Heart left ventricle (tissue), 16 donors: ENCODE measurements at regions of chr9 and their contacts with region 1.

Region 1: GRCh38 chr9:6412487-6413364 is at the start of gene UHRF2:
- DNase-seq: peak; percentile 98 to 100 (median 99)
- ATAC-seq: peak; percentile 98 to 99 (median 99)
- H3K4me3 ChIP-seq: peak within 1 kb of the TSS; percentile 66 to 98 (median 95)
- H3K27ac ChIP-seq: peak within 1 kb of the TSS; percentile 69 to 98 (median 91)
- H3K4me1 ChIP-seq: peaks cover 0 to 37% (median 16%) of the 10 kb centered on the region in 12 donors
- H3K27me3 ChIP-seq: peaks cover 0 to 5% (median 0%) of the 10 kb centered on the region in 9 donors
- CTCF ChIP-seq: peak in 1 of 12 donors; percentile 17
- POLR2A ChIP-seq: peak in 1 of 2 donors; percentile 70
- total RNA-seq, gene UHRF2: 12.2 to 20.6 (median 17.1) TPM

Region 2: DNA sequence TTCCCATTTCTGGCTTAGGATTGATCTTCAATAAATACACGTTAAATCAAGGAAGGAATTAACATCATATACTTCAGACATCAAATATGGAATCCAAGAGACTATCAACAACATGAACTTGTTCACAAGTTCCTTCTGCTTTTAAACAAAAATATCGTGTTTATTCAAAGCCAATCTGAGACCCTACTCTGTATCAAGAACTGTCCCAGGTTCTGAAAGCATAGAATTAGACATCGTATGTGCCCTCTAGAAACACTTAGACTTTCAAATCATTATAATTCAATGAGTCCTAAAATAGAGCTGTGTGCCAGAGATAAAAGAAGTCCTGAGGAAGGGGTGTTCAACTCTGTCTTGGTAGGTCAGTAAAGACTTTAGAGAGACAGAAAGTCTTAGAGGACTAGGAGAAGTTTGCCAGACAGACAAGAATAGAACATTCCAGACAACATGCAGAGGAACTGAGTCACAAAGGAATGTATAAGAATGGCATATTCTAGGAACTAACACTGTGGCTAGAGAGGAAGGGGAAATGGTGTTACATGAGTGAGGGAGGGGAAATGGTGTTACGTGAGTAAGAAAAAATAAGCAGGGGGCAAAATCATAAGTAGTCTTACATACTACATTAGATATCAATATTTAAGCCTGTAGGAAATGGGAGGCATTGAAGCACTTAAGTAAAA is 81.6 kb before region 1 on chr9:
- intact Hi-C with region 1: no loop called
- DNase-seq: no peak
- ATAC-seq: no peak
- H3K4me3 ChIP-seq: no peak overlapping the region
- H3K27ac ChIP-seq: no peak overlapping the region
- H3K4me1 ChIP-seq: no peaks in the 10 kb centered on the region
- H3K27me3 ChIP-seq: peaks cover 0 to 6% (median 0%) of the 10 kb centered on the region in 9 donors
- CTCF ChIP-seq: no peak
- POLR2A ChIP-seq: no peak

Region 3: GRCh38 chr9:6449645-6450044 is 36.9 kb after region 1 on chr9:
- intact Hi-C with region 1: loop called in 2 of 10 experiments (anchors 5 kb)
- DNase-seq: no peak
- ATAC-seq: peak; percentile 59 to 78 (median 67)
- H3K4me3 ChIP-seq: no peak overlapping the region
- H3K27ac ChIP-seq: peak overlapping the region in 1 of 12 donors; percentile 7
- H3K4me1 ChIP-seq: peaks cover 0 to 46% (median 27%) of the 10 kb centered on the region in 12 donors
- H3K27me3 ChIP-seq: no peaks in the 10 kb centered on the region
- CTCF ChIP-seq: no peak
- POLR2A ChIP-seq: no peak

Region 4: DNA sequence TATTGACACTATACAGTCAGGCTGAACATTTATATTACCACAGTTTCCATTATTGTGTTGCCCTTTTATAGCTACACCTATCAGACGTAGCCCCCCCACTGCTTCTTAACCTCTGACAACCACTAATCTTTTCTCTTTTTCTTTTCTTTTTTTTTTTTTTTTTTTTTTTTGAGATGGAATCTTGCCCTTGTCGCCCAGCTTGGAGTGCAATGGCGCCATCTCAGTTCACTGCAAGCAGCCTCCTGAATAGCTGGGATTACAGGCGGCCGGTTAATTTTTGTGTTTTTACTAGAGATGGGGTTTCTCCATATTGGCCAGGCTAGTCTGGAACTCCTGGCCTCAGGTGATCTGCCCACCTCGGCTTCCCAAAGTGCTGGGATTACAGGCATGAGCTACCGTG is 75.7 kb after region 1 on chr9:
- intact Hi-C with region 1: loop called in 2 of 10 experiments (anchors 10 kb)
- DNase-seq: no peak
- ATAC-seq: no peak
- H3K4me3 ChIP-seq: no peak overlapping the region
- H3K27ac ChIP-seq: no peak overlapping the region
- H3K4me1 ChIP-seq: no peaks in the 10 kb centered on the region
- H3K27me3 ChIP-seq: no peaks in the 10 kb centered on the region
- CTCF ChIP-seq: no peak
- POLR2A ChIP-seq: no peak

Region 5: GRCh38 chr9:6498982-6499381 is 86.3 kb after region 1 on chr9:
- intact Hi-C with region 1: loop called in 1 of 10 experiments (anchors 10 kb)
- DNase-seq: no peak
- ATAC-seq: no peak
- H3K4me3 ChIP-seq: no peak overlapping the region
- H3K27ac ChIP-seq: no peak overlapping the region
- H3K4me1 ChIP-seq: peaks cover 0 to 6% (median 0%) of the 10 kb centered on the region in 12 donors
- H3K27me3 ChIP-seq: no peaks in the 10 kb centered on the region
- CTCF ChIP-seq: no peak
- POLR2A ChIP-seq: no peak

Region 6: GRCh38 chr9:6681147-6681956 is 268.6 kb after region 1 on chr9:
- intact Hi-C with region 1: loop called in 3 of 10 experiments (anchors 2 to 10 kb)
- DNase-seq: peak; percentile 96 to 99 (median 98)
- ATAC-seq: peak; percentile 98 to 99 (median 99)
- H3K4me3 ChIP-seq: peak overlapping the region; percentile 41 to 81 (median 66)
- H3K27ac ChIP-seq: peak overlapping the region; percentile 77 to 100 (median 95)
- H3K4me1 ChIP-seq: peaks cover 0 to 29% (median 10%) of the 10 kb centered on the region in 12 donors
- H3K27me3 ChIP-seq: no peaks in the 10 kb centered on the region
- CTCF ChIP-seq: peak in 1 of 12 donors; percentile 6
- POLR2A ChIP-seq: peak in 1 of 2 donors; percentile 69

Region 7: DNA sequence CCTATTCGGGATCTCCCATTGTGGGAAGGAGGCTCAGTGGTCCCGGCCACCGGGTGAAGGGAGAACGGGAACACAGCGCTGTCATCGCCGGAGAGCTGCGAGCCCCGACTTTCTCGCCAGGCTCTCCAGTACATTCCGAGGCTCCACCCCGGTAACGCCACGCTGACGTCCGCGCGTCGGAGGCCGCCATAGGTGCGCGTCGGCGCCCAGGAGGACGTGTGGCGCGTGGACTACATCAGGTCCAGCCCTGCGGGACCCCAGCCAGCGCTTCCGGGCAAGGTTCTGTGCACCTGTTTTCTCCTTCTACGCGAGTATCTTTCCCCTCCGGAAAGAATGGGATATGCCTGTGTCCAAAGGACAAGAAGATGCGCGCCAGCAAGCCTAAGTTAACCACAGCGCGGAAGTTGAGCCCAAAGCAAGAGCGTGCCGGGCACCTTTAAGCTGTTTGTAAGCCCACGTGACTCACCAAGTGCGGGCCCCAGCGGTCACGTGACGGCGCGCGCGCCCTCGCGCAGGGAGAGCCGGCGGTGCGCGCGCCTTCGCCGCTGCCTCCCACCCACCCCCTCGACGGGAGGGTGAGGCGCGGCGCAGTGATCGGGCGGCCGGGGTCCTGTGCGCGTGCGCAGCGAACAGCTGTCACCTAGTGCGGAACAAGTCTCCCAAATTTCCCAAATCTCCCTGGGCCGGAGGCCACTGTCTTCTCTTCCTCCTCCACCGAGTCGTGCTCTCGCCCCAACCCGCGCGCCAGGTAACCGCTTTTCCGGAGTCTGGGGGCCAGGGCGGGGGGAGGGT is 344.9 kb after region 1 on chr9 and contains the start of gene KDM4C:
- intact Hi-C with region 1: loop called in 1 of 10 experiments (anchors 5 kb)
- DNase-seq: peak; percentile 94 to 98 (median 96)
- ATAC-seq: peak; percentile 95 to 98 (median 96)
- H3K4me3 ChIP-seq: peak within 1 kb of the TSS; percentile 62 to 99 (median 90)
- H3K27ac ChIP-seq: peak within 1 kb of the TSS; percentile 90 to 99 (median 98)
- H3K4me1 ChIP-seq: peaks cover 0 to 16% (median 8%) of the 10 kb centered on the region in 12 donors
- H3K27me3 ChIP-seq: no peaks in the 10 kb centered on the region
- CTCF ChIP-seq: no peak
- POLR2A ChIP-seq: peak; percentile 22 to 87
- total RNA-seq, gene KDM4C: 8.8 to 19.9 (median 14.1) TPM